ENCODE measurements at regions of chr18 and their contacts with region 1.

Region 1: GRCh38 chr18:69948919-69949537 is 1.4 kb upstream of the CD226 start:
- DNase-seq: peak in 2 of 9 experiments; percentile 50 to 65
- ATAC-seq: no peak
- H3K4me3 ChIP-seq: no peak overlapping the region
- H3K4me3 Mint-ChIP-seq: no peak overlapping the region
- H3K27ac ChIP-seq: peak overlapping the region in 1 of 2 experiments; percentile 69
- H3K27ac Mint-ChIP-seq: no peak overlapping the region
- H3K4me1 ChIP-seq: peaks cover 66% of the 10 kb centered on the region
- H3K4me1 Mint-ChIP-seq: peaks cover 30% of the 10 kb centered on the region
- H3K27me3 ChIP-seq: no peaks in the 10 kb centered on the region
- H3K27me3 Mint-ChIP-seq: no peaks in the 10 kb centered on the region
- CTCF ChIP-seq: no peak

Region 2: DNA sequence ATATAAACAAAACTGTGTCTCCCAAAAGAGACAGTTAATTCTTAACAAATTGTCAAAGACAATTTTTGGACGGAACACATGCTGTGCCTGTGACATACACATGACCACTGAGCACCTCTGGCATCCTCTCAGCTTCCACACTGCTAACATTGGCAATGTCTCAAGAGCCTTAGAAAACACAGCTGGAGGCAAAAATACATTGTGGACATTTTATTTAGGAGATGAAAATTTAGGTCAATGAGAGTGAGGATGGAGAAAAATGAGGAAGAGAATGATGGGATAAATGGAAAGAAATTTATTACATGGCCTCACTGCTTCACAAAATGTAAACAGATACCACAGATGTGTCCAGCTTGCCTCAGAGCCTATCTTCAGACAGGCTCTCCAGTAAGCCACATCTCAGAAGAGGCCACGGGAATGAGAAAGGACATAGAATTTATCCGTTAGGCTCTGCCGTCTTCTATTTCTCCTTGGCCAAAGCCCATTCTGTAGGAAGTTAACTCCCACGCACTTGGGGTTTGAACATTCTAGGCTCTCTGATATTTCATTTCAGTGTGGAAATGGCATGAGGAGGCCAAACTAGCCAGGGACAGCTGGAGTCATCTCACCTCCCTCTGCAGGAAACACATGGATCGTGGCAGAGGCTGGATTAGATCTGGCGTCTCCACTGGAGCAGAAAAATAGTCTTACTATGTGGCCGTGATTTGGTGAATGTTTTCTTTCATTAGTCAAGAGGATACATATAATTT is 1913.1 kb before region 1 on chr18:
- CTCF ChIA-PET with region 1: no interaction called
- POLR2A ChIA-PET with region 1: no interaction called
- intact Hi-C with region 1: no loop called
- DNase-seq: no peak
- ATAC-seq: no peak
- H3K4me3 ChIP-seq: no peak overlapping the region
- H3K4me3 Mint-ChIP-seq: no peak overlapping the region
- H3K27ac ChIP-seq: no peak overlapping the region
- H3K27ac Mint-ChIP-seq: no peak overlapping the region
- H3K4me1 ChIP-seq: no peaks in the 10 kb centered on the region
- H3K4me1 Mint-ChIP-seq: no peaks in the 10 kb centered on the region
- H3K27me3 ChIP-seq: no peaks in the 10 kb centered on the region
- H3K27me3 Mint-ChIP-seq: no peaks in the 10 kb centered on the region
- CTCF ChIP-seq: no peak

Region 3: GRCh38 chr18:69935319-69936190 is 13.5 kb before region 1 on chr18:
- CTCF ChIA-PET with region 1: interaction called, 14 read pairs
- POLR2A ChIA-PET with region 1: interaction called, 32 read pairs
- intact Hi-C with region 1: loop called in 1 of 2 experiments (anchors 1 kb)
- DNase-seq: peak; percentile 64 to 95 (median 80)
- ATAC-seq: peak; percentile 96
- H3K4me3 ChIP-seq: peak overlapping the region; percentile 1 to 18
- H3K4me3 Mint-ChIP-seq: no peak overlapping the region
- H3K27ac ChIP-seq: peak overlapping the region; percentile 25 to 63
- H3K27ac Mint-ChIP-seq: no peak overlapping the region
- H3K4me1 ChIP-seq: peaks cover 75% of the 10 kb centered on the region
- H3K4me1 Mint-ChIP-seq: peaks cover 38% of the 10 kb centered on the region
- H3K27me3 ChIP-seq: no peaks in the 10 kb centered on the region
- H3K27me3 Mint-ChIP-seq: no peaks in the 10 kb centered on the region
- CTCF ChIP-seq: no peak

Region 4: GRCh38 chr18:69968039-69968438 is 19.0 kb after region 1 on chr18:
- CTCF ChIA-PET with region 1: no interaction called
- POLR2A ChIA-PET with region 1: no interaction called
- intact Hi-C with region 1: no loop called
- DNase-seq: peak in 7 of 9 experiments; percentile 38 to 70 (median 50)
- ATAC-seq: peak; percentile 94
- H3K4me3 ChIP-seq: no peak overlapping the region
- H3K4me3 Mint-ChIP-seq: no peak overlapping the region
- H3K27ac ChIP-seq: peak overlapping the region in 1 of 2 experiments; percentile 43
- H3K27ac Mint-ChIP-seq: peak overlapping the region; percentile 87
- H3K4me1 ChIP-seq: peaks cover 8% of the 10 kb centered on the region
- H3K4me1 Mint-ChIP-seq: peaks cover 24% of the 10 kb centered on the region
- H3K27me3 ChIP-seq: no peaks in the 10 kb centered on the region
- H3K27me3 Mint-ChIP-seq: no peaks in the 10 kb centered on the region
- CTCF ChIP-seq: no peak

Region 5: GRCh38 chr18:70432804-70433400 is 483.9 kb after region 1 on chr18:
- CTCF ChIA-PET with region 1: no interaction called
- POLR2A ChIA-PET with region 1: no interaction called
- intact Hi-C with region 1: no loop called
- DNase-seq: no peak
- ATAC-seq: no peak
- H3K4me3 ChIP-seq: no peak overlapping the region
- H3K4me3 Mint-ChIP-seq: no peak overlapping the region
- H3K27ac ChIP-seq: no peak overlapping the region
- H3K27ac Mint-ChIP-seq: no peak overlapping the region
- H3K4me1 ChIP-seq: no peaks in the 10 kb centered on the region
- H3K4me1 Mint-ChIP-seq: no peaks in the 10 kb centered on the region
- H3K27me3 ChIP-seq: no peaks in the 10 kb centered on the region
- H3K27me3 Mint-ChIP-seq: no peaks in the 10 kb centered on the region
- CTCF ChIP-seq: no peak